PC-9 (cell line): ENCODE measurements at regions of chr5 and their contacts with region 1.

Region 1: DNA sequence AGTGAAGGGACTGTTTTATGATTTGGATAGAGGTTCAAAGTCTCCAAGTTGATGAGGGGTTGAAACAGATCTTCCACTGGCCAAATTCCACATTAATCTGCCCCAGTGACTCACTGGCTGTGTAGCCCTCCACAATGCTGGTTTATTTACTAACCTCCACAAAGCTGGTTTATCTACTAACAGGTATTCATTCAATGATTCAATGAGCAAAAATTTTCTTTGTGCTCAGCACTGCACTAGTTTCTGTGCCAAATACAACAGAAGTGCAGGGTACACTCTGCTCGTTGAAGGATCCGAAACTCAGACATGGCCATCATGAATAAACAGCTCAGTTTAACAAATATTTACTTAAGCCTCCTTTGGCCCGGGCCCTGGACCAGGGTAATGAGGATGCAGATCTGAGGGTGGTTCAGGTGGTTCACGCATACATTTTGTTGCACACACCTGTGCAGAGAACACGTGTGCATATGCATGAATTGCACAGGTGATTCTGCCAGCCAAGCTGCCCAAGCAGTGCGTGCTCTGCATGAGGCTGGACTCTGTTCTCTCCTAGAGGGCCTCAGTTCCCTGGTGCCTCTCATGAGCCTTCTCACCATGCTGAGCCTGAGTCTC is 71.0 kb downstream of the SH3PXD2B start:
- DNase-seq: peak; percentile 47 to 98
- H3K4me3 ChIP-seq: no peak overlapping the region
- H3K27ac ChIP-seq: peak overlapping the region; percentile 48
- H3K4me1 ChIP-seq: peaks cover 25% of the 10 kb centered on the region
- H3K27me3 ChIP-seq: no peaks in the 10 kb centered on the region
- CTCF ChIP-seq: no peak

Region 2: GRCh38 chr5:172569861-172570558 is 186.7 kb after region 1 on chr5:
- CTCF ChIA-PET with region 1: interaction called, 18 read pairs
- POLR2A ChIA-PET with region 1: no interaction called
- intact Hi-C with region 1: no loop called
- DNase-seq: no peak
- H3K4me3 ChIP-seq: no peak overlapping the region
- H3K27ac ChIP-seq: no peak overlapping the region
- H3K4me1 ChIP-seq: no peaks in the 10 kb centered on the region
- H3K27me3 ChIP-seq: peaks cover 48% of the 10 kb centered on the region
- CTCF ChIP-seq: no peak